ENCODE measurements at regions of chr12 and their contacts with region 1.

Region 1: GRCh38 chr12:30985814-30986452 is 59.4 kb downstream of the TSPAN11 start:
- DNase-seq: peak in 1 of 2 experiments; percentile 73
- H3K4me3 ChIP-seq: no peak overlapping the region
- H3K27ac ChIP-seq: no peak overlapping the region
- H3K4me1 ChIP-seq: peaks cover 11% of the 10 kb centered on the region
- H3K27me3 ChIP-seq: no peaks in the 10 kb centered on the region
- CTCF ChIP-seq: peak; percentile 84

Region 2: GRCh38 chr12:30965613-30965985 is 20.3 kb before region 1 on chr12:
- CTCF ChIA-PET with region 1: interaction called, 6 read pairs
- POLR2A ChIA-PET with region 1: interaction called, 3 read pairs
- intact Hi-C with region 1: loop called (anchors 2 kb)
- DNase-seq: peak in 1 of 2 experiments; percentile 49
- H3K4me3 ChIP-seq: no peak overlapping the region
- H3K27ac ChIP-seq: no peak overlapping the region
- H3K4me1 ChIP-seq: peaks cover 10% of the 10 kb centered on the region
- H3K27me3 ChIP-seq: peaks cover 9% of the 10 kb centered on the region; the same call in 1 of the 2 replicates
- CTCF ChIP-seq: peak; percentile 70

Region 3: DNA sequence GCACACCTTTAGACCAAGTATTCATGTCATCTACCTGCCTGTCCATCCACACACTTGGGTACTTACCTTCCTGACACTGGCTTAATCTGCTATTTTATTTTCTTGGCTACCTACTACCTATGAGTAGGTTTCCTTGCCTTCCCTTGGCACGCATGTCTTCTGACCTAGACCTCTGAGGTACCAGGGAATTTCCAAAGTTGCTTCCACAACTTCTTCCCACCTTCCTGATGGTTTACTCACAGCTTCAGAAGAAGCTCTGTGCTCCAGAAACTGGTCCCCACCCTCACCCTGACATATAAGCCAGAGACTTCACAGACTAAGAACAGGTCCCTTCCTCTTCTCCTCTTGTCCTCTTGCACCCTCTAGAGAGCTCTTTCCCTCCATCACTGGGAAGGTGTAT is 52.0 kb after region 1 on chr12:
- CTCF ChIA-PET with region 1: no interaction called
- POLR2A ChIA-PET with region 1: no interaction called
- intact Hi-C with region 1: no loop called
- DNase-seq: no peak
- H3K4me3 ChIP-seq: no peak overlapping the region
- H3K27ac ChIP-seq: no peak overlapping the region
- H3K4me1 ChIP-seq: peaks cover 45% of the 10 kb centered on the region
- H3K27me3 ChIP-seq: no peaks in the 10 kb centered on the region
- CTCF ChIP-seq: no peak